ENCODE measurements at regions of chr22 and their contacts with region 1.

Region 1: GRCh38 chr22:22195265-22196017 is 49.1 kb upstream of the VPREB1 start:
- DNase-seq: peak; percentile 87
- CTCF ChIP-seq: peak; percentile 91

Region 2: GRCh38 chr22:22168190-22168940 is 27.1 kb before region 1 on chr22:
- CTCF ChIA-PET with region 1: interaction called, 55 read pairs
- POLR2A ChIA-PET with region 1: no interaction called
- DNase-seq: peak; percentile 62
- CTCF ChIP-seq: no peak

Region 3: GRCh38 chr22:22215659-22216449 is 20.4 kb after region 1 on chr22:
- CTCF ChIA-PET with region 1: interaction called, 29 read pairs
- POLR2A ChIA-PET with region 1: no interaction called
- DNase-seq: no peak
- CTCF ChIP-seq: no peak